Activated CD4-positive, alpha-beta memory T cell treated with anti-CD3 and anti-CD28 coated beads, Interleukin-2, amount 10 ng/mL, durations not matched to agents 7 days and 5 days (primary cell): ENCODE measurements at regions of chr12 and their contacts with region 1.

Region 1: GRCh38 chr12:54935235-54935951 is 49.2 kb downstream of the TESPA1 start:
- DNase-seq: peak; percentile 49
- H3K4me3 Mint-ChIP-seq: peak overlapping the region; percentile 48
- H3K27ac Mint-ChIP-seq: peak overlapping the region; percentile 98
- H3K4me1 Mint-ChIP-seq: peaks cover 56% of the 10 kb centered on the region
- H3K27me3 Mint-ChIP-seq: no peaks in the 10 kb centered on the region

Region 2: DNA sequence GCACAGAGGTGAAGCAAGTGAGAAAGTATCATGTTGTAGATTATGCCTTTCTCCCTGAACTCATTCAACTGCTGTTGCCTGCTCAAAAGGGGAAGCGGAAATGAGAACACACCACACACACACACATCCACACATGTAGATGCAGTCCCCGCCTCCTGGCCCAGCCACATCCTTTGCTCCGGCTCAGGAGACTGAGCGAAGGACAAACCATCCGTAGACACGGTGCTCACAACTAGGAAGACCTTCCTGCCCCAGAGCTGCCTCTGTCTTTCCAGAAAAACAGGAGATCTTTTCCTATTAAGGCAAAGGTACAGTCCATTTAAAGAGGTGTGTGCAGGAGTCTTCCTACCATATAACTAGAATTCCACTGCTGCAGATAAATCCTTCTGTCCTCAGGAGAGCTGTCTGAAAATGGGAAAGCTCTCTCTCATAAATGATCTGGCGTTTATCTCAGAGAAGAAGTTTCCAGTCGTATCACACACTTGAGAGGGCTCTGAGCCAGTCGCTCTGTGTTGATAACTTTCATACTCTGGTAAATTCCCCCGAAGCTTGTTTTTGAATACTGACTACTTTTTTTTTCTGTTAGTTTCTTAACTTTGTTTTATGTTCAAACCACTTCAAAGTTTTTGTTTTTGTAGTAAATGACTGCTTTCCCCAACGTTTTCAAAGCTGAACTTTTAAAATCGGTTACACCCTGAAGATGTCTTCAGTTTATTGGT is 49.4 kb after region 1 on chr12 and contains the start of gene TESPA1:
- CTCF ChIA-PET with region 1: no interaction called
- POLR2A ChIA-PET with region 1: interaction called, 29 read pairs
- DNase-seq: peak; percentile 91
- H3K4me3 Mint-ChIP-seq: peak within 1 kb of the TSS; percentile 79
- H3K27ac Mint-ChIP-seq: peak within 1 kb of the TSS; percentile 85
- H3K4me1 Mint-ChIP-seq: peaks cover 72% of the 10 kb centered on the region
- H3K27me3 Mint-ChIP-seq: no peaks in the 10 kb centered on the region
- total RNA-seq, gene TESPA1: 111 to 112 TPM